Right ventricle myocardium inferior (tissue), 1 donor: ENCODE measurements at regions of chr2 and their contacts with region 1.

Region 1: DNA sequence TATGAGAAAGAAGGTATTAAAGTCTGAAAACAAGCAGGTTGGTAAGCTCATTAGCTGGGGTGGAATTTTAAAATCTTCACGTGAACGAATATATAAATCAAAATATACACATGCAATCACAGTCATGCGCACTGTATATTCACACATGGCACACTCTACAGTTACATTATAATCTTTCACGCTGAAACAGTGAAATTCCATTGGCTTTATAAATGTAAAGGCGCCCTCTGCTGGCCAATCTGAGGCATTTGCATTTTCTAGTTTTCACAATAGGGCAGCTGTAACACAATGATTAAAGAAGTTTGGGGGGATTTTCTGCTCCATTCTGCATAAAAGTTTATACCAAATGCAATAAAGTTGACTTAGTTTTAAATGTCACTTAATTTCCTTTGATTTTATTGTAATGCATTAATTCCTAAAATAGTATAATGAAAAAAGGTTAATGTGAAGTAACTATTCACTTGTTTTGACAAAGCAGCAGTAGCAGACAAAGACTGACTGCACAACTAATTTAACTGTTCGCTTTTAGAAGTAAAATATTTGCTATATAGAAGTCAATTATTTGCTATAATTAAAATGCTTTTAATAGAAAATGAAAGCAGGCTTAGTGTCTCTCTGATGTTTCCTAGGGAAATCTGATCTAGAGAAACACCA is 17.2 kb downstream of the IFIH1 start:
- DNase-seq: peak; percentile 67
- ATAC-seq: peak; percentile 44

Region 2: GRCh38 chr2:161586517-161587167 is 714.6 kb before region 1 on chr2:
- intact Hi-C with region 1: loop called (anchors 5 kb)
- DNase-seq: no peak
- ATAC-seq: no peak

Region 3: GRCh38 chr2:162153608-162154224 is 147.6 kb before region 1 on chr2:
- intact Hi-C with region 1: loop called (anchors 10 kb)
- DNase-seq: no peak
- ATAC-seq: no peak

Region 4: GRCh38 chr2:162221064-162221463 is 80.2 kb before region 1 on chr2:
- intact Hi-C with region 1: loop called (anchors 2 kb)
- DNase-seq: peak; percentile 88
- ATAC-seq: peak; percentile 70

Region 5: GRCh38 chr2:162261032-162261945 is 40.0 kb before region 1 on chr2:
- intact Hi-C with region 1: no loop called
- DNase-seq: peak; percentile 71
- ATAC-seq: peak; percentile 82